Psoas muscle (tissue), 8 donors: ENCODE measurements at regions of chr5 and their contacts with region 1.

Region 1: GRCh38 chr5:66144074-66144833 is at the start of gene SREK1:
- DNase-seq: peak; percentile 92 to 96
- ATAC-seq: peak; percentile 91 to 94 (median 94)
- H3K4me3 ChIP-seq: peak within 1 kb of the TSS; percentile 91
- H3K27ac ChIP-seq: peak within 1 kb of the TSS; percentile 99
- H3K4me1 ChIP-seq: peaks cover 36% of the 10 kb centered on the region
- H3K27me3 ChIP-seq: no peaks in the 10 kb centered on the region
- CTCF ChIP-seq: no peak
- total RNA-seq, gene SREK1: 25.1 to 29.8 (median 27.9) TPM

Region 2: DNA sequence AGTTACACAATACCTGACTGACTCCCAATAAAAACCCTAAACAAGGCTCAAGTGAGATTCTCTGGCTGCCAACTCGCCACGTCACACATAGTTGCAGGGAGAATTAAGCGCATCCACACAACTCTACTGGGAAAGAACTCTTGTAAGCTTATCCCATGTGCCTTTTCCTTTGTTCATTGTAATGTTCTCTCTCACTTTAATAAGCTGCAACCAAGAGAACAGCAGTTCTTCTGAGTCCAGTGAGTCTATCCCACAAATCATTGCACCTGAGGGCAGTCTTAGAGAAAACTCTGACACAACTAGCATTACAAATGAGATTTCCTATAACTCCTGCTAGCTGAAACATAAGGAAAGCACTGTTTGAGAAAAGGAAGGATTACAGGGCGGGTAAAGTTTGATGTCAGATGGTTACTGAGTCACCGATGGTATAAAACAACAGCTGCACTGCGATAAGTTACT is 608.7 kb before region 1 on chr5:
- intact Hi-C with region 1: no loop called
- DNase-seq: no peak
- ATAC-seq: no peak
- H3K4me3 ChIP-seq: no peak overlapping the region
- H3K27ac ChIP-seq: no peak overlapping the region
- H3K4me1 ChIP-seq: no peaks in the 10 kb centered on the region
- H3K27me3 ChIP-seq: no peaks in the 10 kb centered on the region
- CTCF ChIP-seq: no peak

Region 3: GRCh38 chr5:65624571-65625555 is 519.4 kb before region 1 on chr5 and contains the starts of genes SHLD3 and TRAPPC13:
- intact Hi-C with region 1: loop called in 1 of 2 experiments (anchors 10 kb)
- DNase-seq: peak; percentile 79 to 86
- ATAC-seq: peak; percentile 91 to 93 (median 91)
- H3K4me3 ChIP-seq: peak within 1 kb of the TSS; percentile 86
- H3K27ac ChIP-seq: peak within 1 kb of the TSS; percentile 88
- H3K4me1 ChIP-seq: peaks cover 36% of the 10 kb centered on the region
- H3K27me3 ChIP-seq: no peaks in the 10 kb centered on the region
- CTCF ChIP-seq: peak; percentile 6
- total RNA-seq, gene SHLD3: 0.94 to 2.5 (median 1.7) TPM
- total RNA-seq, gene TRAPPC13: 11.1 to 16.5 (median 13.5) TPM

Region 4: DNA sequence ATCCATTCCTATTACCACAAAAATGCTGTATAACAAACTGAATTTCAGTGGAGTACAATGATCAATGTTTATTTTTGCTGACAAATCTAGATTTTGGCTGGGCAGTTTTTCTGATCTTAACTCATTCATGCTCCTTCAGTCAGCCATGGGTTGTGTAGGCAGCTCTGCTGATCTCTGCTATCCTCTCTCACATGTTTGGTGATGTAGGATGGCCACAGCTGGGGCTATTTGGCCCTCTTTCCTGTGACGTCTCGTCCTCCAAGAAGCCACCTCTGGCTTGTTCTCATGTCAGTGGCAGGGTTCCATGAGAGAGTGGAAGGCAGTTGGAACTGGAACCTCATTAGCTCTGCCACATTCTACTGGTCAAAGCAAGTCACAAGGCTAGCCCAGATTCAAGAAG is 413.3 kb before region 1 on chr5:
- intact Hi-C with region 1: loop called in 1 of 2 experiments (anchors 10 kb)
- DNase-seq: no peak
- ATAC-seq: peak in 1 of 4 donors; percentile 44
- H3K4me3 ChIP-seq: no peak overlapping the region
- H3K27ac ChIP-seq: no peak overlapping the region
- H3K4me1 ChIP-seq: no peaks in the 10 kb centered on the region
- H3K27me3 ChIP-seq: no peaks in the 10 kb centered on the region
- CTCF ChIP-seq: no peak